Transverse colon (tissue), 4 donors: ENCODE measurements at regions of chr1 and their contacts with region 1.

Region 1: DNA sequence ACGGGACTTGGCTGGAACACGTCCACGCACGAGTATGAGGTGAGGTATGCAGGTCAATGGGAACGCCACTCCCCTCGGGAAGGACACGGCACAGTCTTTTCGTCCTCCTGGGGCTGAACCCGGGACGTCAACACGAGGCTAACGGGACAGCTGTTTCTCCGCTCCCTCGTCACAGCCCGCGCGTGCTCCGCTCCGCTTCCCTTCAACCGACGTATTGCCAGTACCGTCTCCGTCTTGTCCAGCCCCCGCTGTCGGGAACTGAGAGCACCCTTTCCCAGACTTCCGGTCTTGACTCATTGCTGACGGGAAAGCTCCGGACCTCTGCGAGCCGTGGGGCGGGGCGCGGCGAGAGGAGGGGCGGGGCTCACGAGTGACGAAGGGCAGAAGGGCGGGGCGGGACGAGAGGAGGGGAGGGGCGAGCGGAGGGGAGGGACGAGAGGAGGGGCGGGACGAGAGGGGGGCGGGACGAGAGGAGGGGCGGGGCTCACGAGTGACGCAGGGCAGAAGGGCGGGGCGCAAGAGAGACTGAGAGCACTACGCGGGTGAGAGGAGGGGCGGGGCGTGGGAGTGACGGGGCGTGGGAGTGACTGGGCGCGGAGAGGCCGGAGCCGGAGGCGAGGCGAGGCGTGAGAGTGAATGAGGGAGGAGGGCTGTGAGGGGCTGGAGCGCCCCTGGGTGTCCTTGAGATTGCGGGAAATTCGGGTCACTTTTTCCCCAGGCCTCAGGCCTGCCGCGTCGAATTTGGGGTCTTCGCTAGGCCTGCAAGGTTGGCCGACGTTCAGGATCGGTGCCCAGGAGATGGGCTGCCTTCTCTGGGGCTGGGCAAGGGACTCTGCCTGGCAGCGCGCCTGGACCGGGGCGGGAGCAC is 22.2 kb upstream of the CFAP126 start:
- DNase-seq: peak; percentile 99
- H3K4me3 ChIP-seq: peak overlapping the region; percentile 42 to 55 (median 52)
- H3K27ac ChIP-seq: peak overlapping the region; percentile 83 to 91 (median 88)
- H3K4me1 ChIP-seq: peaks cover 0 to 12% (median 8%) of the 10 kb centered on the region in 4 donors
- H3K27me3 ChIP-seq: no peaks in the 10 kb centered on the region
- CTCF ChIP-seq: no peak
- EP300 ChIP-seq: peak; percentile 100
- POLR2A ChIP-seq: peak; percentile 94

Region 2: DNA sequence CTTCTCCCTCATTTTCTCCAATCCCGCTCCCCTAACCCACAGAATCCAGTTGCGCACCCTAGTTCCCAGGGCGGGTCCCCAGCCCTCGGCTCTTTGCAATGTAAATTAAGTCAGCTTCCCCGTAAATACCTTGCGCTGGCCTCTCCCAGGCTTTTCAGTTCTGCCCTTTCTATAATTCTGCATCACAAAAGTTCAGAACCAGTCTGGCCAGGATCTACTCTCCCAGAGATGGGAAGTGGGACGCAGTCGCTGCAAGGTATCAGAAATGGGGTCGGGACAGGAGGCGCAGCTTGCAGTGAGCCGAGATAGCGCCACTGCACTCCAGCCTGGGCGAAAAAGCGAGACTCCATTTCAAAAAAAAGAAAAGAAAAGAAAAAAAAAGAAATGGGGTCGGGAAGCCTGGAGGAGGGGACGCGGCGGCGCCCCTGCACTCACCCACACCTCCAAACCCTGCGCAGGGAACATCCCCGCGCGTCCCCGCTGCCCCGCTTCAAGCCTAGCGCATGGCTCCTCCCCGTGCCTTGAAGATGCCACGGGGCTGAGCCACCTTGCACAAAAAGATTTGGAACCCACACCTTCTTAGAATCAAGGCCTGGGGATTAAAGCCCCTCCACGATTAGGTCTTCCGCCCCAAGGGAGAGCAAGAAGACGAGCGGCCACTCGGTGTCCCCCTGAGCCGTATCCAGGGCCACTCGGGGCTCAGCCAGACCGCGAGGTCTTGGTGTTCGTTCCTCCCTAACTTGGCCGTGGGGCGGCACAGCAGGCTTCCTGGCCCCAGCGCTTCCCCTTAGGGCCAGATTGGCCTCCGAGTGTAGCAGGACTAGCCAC is 408.1 kb before region 1 on chr1:
- in situ Hi-C with region 1: no loop called
- intact Hi-C with region 1: no loop called
- DNase-seq: no peak
- H3K4me3 ChIP-seq: peak overlapping the region in 1 of 4 donors; percentile 9
- H3K27ac ChIP-seq: no peak overlapping the region
- H3K4me1 ChIP-seq: peaks cover 0 to 12% (median 0%) of the 10 kb centered on the region in 4 donors
- H3K27me3 ChIP-seq: peaks cover 43% of the 10 kb centered on the region
- CTCF ChIP-seq: no peak
- EP300 ChIP-seq: no peak
- POLR2A ChIP-seq: no peak

Region 3: GRCh38 chr1:161209790-161210409 is 180.0 kb before region 1 on chr1:
- in situ Hi-C with region 1: loop called in 1 of 4 experiments (anchors 25 kb)
- intact Hi-C with region 1: loop called (anchors 5 kb)
- DNase-seq: peak; percentile 76
- H3K4me3 ChIP-seq: no peak overlapping the region
- H3K27ac ChIP-seq: peak overlapping the region; percentile 7 to 80 (median 47)
- H3K4me1 ChIP-seq: peaks cover 4 to 37% (median 8%) of the 10 kb centered on the region in 4 donors
- H3K27me3 ChIP-seq: no peaks in the 10 kb centered on the region
- CTCF ChIP-seq: peak; percentile 83 to 89 (median 86)
- EP300 ChIP-seq: no peak
- POLR2A ChIP-seq: no peak

Region 4: DNA sequence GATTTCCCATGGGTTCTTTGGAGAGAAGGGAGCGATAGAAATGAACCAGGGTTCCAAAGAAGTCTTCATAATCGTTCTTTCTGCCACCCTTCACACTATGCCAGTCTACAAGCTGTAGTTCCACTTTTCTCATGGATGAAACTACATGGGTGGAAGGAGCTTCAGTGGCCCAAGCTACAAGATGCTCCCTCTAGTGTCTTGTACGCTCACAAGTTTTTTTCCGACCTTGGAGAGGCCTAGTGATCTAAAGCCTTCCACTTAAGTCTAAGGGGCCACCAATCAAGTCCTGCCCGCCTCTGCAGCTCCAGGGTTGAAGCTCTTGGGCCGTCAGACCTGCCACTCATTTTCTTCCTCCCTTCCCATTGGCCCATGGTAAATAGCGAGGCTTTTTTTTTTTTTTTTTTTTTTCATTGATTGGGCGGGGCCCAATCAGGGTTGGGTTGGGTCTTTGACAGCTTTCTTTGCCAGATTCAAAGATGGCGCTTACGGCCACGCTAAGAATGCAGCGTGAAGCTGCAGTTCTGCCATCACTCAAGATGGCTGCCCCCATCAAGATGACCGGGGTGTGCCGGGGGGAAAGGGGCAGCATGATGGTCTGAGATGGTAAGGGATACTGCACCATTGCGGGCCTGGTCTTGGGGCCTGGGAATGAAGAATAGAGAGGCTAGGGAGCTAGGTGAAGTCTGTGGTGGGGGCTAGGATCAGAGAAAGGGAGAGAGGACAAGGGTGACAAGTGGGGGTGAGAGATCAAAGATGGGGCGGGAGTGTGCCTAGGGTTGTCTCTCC is 164.2 kb before region 1 on chr1 and contains the start of gene TOMM40L:
- in situ Hi-C with region 1: loop called in 2 of 4 experiments (anchors 10 to 25 kb)
- intact Hi-C with region 1: no loop called
- DNase-seq: peak; percentile 90
- H3K4me3 ChIP-seq: peak within 1 kb of the TSS; percentile 52 to 72 (median 61)
- H3K27ac ChIP-seq: peak within 1 kb of the TSS; percentile 70 to 87 (median 82)
- H3K4me1 ChIP-seq: peaks cover 14 to 23% (median 20%) of the 10 kb centered on the region in 4 donors
- H3K27me3 ChIP-seq: no peaks in the 10 kb centered on the region
- CTCF ChIP-seq: peak; percentile 39 to 73 (median 51)
- EP300 ChIP-seq: no peak
- POLR2A ChIP-seq: peak; percentile 2
- total RNA-seq, gene TOMM40L: 5.8 to 21.4 (median 12.6) TPM

Region 5: DNA sequence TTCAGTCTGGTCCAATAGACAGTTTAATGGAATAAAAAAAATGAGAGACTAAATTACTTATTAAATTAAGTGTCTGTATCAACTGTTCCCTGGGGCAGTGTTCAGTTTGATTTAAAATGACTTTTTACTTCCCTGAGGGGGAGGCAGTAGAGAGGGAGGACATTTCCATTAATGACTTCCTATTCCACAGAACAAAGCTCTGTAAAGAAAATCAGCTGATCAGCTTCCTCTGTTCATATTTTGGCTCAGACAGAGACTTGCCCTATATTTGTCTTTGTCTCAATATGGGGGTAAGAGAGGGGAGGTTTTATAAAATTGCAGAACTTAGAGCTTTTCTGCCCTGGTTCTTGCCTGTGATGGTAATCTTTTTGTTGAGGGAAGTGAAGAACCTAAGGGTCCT is 30.6 kb before region 1 on chr1:
- in situ Hi-C with region 1: no loop called
- intact Hi-C with region 1: no loop called
- DNase-seq: no peak
- H3K4me3 ChIP-seq: no peak overlapping the region
- H3K27ac ChIP-seq: peak overlapping the region in 1 of 4 donors; percentile 20
- H3K4me1 ChIP-seq: no peaks in the 10 kb centered on the region
- H3K27me3 ChIP-seq: no peaks in the 10 kb centered on the region
- CTCF ChIP-seq: no peak
- EP300 ChIP-seq: no peak
- POLR2A ChIP-seq: no peak

Region 6: DNA sequence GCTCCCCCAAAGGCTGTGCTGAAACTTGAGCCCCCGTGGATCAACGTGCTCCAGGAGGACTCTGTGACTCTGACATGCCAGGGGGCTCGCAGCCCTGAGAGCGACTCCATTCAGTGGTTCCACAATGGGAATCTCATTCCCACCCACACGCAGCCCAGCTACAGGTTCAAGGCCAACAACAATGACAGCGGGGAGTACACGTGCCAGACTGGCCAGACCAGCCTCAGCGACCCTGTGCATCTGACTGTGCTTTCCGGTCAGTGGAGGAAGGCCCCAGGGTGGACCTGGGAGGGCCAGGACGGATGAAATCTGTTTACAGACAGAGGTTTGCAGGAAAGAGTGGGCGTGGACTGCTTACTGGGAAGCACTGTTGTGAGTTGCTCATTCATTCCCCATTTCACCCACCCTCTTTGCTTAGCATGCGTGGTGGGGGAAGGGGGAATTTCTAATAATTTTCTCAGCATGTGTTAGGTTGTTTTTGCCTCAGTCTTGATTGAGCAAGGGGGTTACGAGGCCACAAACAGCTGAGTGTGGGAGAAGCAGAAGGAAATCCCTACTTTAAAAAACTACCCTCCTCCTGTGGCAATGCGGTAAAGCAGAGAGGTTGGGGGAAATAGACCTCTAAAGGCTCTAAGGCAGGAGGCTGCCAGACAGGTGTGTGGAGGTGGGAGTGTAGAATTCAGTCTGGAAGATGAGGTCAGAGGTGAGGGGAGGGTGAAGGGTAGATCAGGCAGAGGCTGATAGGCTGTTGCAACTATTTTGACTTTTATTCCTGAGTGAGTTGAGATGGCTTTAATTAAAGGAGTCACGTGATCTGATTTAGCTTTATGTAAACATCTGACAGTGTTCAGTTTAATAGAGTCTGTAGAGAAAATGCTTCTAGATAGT is 116.7 kb after region 1 on chr1:
- in situ Hi-C with region 1: no loop called
- intact Hi-C with region 1: no loop called
- DNase-seq: no peak
- H3K4me3 ChIP-seq: peak overlapping the region in 1 of 4 donors; percentile 18
- H3K27ac ChIP-seq: peak overlapping the region in 2 of 4 donors; percentile 25 to 37
- H3K4me1 ChIP-seq: peaks cover 0 to 6% (median 2%) of the 10 kb centered on the region in 4 donors
- H3K27me3 ChIP-seq: no peaks in the 10 kb centered on the region
- CTCF ChIP-seq: no peak
- EP300 ChIP-seq: no peak
- POLR2A ChIP-seq: no peak

Region 7: GRCh38 chr1:161986328-161986727 is 596.4 kb after region 1 on chr1:
- in situ Hi-C with region 1: no loop called
- intact Hi-C with region 1: no loop called
- DNase-seq: peak; percentile 11
- H3K4me3 ChIP-seq: no peak overlapping the region
- H3K27ac ChIP-seq: peak overlapping the region in 3 of 4 donors; percentile 49 to 80 (median 70)
- H3K4me1 ChIP-seq: peaks cover 0 to 15% (median 7%) of the 10 kb centered on the region in 4 donors
- H3K27me3 ChIP-seq: no peaks in the 10 kb centered on the region
- CTCF ChIP-seq: no peak
- EP300 ChIP-seq: no peak
- POLR2A ChIP-seq: no peak